ENCODE measurements at regions of chr1 and their contacts with region 1.

Region 1: GRCh38 chr1:58783993-58784757 is at the start of gene JUN:
- DNase-seq: peak; percentile 99
- ATAC-seq: peak; percentile 88
- H3K4me3 Mint-ChIP-seq: peak within 1 kb of the TSS; percentile 86
- H3K27ac Mint-ChIP-seq: peak within 1 kb of the TSS; percentile 97
- H3K4me1 Mint-ChIP-seq: peaks cover 14% of the 10 kb centered on the region
- H3K27me3 Mint-ChIP-seq: no peaks in the 10 kb centered on the region
- CTCF ChIP-seq: no peak
- total RNA-seq, gene JUN: 51.4 to 53.2 TPM

Region 2: DNA sequence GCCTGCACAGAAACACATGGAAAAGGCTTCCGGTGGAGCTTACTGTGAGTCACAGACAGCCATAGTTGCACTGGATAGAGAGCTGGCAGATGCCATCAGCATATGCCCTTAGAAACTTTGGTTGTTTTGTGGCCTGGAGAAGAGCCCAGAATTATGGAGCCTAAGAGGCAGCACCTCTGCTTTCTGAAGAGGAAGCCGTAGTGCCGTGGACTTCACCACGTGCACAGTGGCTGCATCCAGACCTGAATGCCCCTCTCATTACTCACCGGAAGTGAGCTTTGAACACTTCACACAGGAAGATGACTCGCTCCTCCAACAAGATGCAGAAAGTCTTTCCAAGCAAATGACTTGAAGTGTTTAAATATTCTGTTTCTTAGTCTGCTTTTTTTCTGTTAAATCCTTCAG is 28.7 kb before region 1 on chr1:
- CTCF ChIA-PET with region 1: interaction called, 5 read pairs
- POLR2A ChIA-PET with region 1: interaction called, 16 read pairs
- intact Hi-C with region 1: no loop called
- DNase-seq: peak; percentile 83
- ATAC-seq: peak; percentile 94
- H3K4me3 Mint-ChIP-seq: peak overlapping the region; percentile 31
- H3K27ac Mint-ChIP-seq: peak overlapping the region; percentile 88
- H3K4me1 Mint-ChIP-seq: peaks cover 46% of the 10 kb centered on the region
- H3K27me3 Mint-ChIP-seq: no peaks in the 10 kb centered on the region
- CTCF ChIP-seq: no peak

Region 3: GRCh38 chr1:58816072-58816746 is 32.0 kb after region 1 on chr1:
- CTCF ChIA-PET with region 1: no interaction called
- POLR2A ChIA-PET with region 1: interaction called, 9 read pairs
- intact Hi-C with region 1: loop called (anchors 2 kb)
- DNase-seq: peak; percentile 93
- ATAC-seq: peak; percentile 92
- H3K4me3 Mint-ChIP-seq: peak overlapping the region; percentile 75
- H3K27ac Mint-ChIP-seq: peak overlapping the region; percentile 81
- H3K4me1 Mint-ChIP-seq: peaks cover 37% of the 10 kb centered on the region
- H3K27me3 Mint-ChIP-seq: no peaks in the 10 kb centered on the region
- CTCF ChIP-seq: no peak

Region 4: GRCh38 chr1:59020151-59020997 is 236.2 kb after region 1 on chr1:
- CTCF ChIA-PET with region 1: interaction called, 5 read pairs
- POLR2A ChIA-PET with region 1: interaction called, 11 read pairs
- intact Hi-C with region 1: no loop called
- DNase-seq: peak; percentile 73
- ATAC-seq: peak; percentile 94
- H3K4me3 Mint-ChIP-seq: peak overlapping the region; percentile 63
- H3K27ac Mint-ChIP-seq: peak overlapping the region; percentile 87
- H3K4me1 Mint-ChIP-seq: peaks cover 26% of the 10 kb centered on the region
- H3K27me3 Mint-ChIP-seq: no peaks in the 10 kb centered on the region
- CTCF ChIP-seq: no peak

Region 5: GRCh38 chr1:59296358-59297256 is 512.4 kb after region 1 on chr1 and contains the start of gene FGGY:
- CTCF ChIA-PET with region 1: no interaction called
- POLR2A ChIA-PET with region 1: interaction called, 3 read pairs
- intact Hi-C with region 1: loop called (anchors 10 kb)
- DNase-seq: peak; percentile 95
- ATAC-seq: peak; percentile 96
- H3K4me3 Mint-ChIP-seq: peak within 1 kb of the TSS; percentile 85
- H3K27ac Mint-ChIP-seq: peak within 1 kb of the TSS; percentile 87
- H3K4me1 Mint-ChIP-seq: peaks cover 39% of the 10 kb centered on the region
- H3K27me3 Mint-ChIP-seq: no peaks in the 10 kb centered on the region
- CTCF ChIP-seq: no peak
- total RNA-seq, gene FGGY: 11.9 to 13.6 TPM